CD4-positive, alpha-beta T cell (primary cell): ENCODE measurements at regions of chr1 and their contacts with region 1.

Region 1: GRCh38 chr1:116570358-116571200 is at the start of gene CD58:
- DNase-seq: peak; percentile 52 to 91 (median 74)
- ATAC-seq: peak; percentile 81
- H3K4me3 ChIP-seq: peak within 1 kb of the TSS; percentile 96
- H3K4me3 Mint-ChIP-seq: peak within 1 kb of the TSS; percentile 96
- H3K27ac ChIP-seq: peak within 1 kb of the TSS; percentile 72 to 87
- H3K27ac Mint-ChIP-seq: peak within 1 kb of the TSS; percentile 91
- H3K4me1 ChIP-seq: peaks cover 34% of the 10 kb centered on the region
- H3K4me1 Mint-ChIP-seq: peaks cover 43% of the 10 kb centered on the region
- H3K27me3 ChIP-seq: no peaks in the 10 kb centered on the region
- H3K27me3 Mint-ChIP-seq: peaks cover 4% of the 10 kb centered on the region
- CTCF ChIP-seq: peak; percentile 72
- total RNA-seq, gene CD58: 4.2 to 5.7 TPM

Region 2: GRCh38 chr1:116133696-116134650 is 436.6 kb before region 1 on chr1:
- CTCF ChIA-PET with region 1: interaction called, 9 read pairs
- POLR2A ChIA-PET with region 1: no interaction called
- intact Hi-C with region 1: loop called in 1 of 2 experiments (anchors 10 kb)
- DNase-seq: peak in 1 of 14 experiments; percentile 13
- ATAC-seq: no peak
- H3K4me3 ChIP-seq: no peak overlapping the region
- H3K4me3 Mint-ChIP-seq: no peak overlapping the region
- H3K27ac ChIP-seq: no peak overlapping the region
- H3K27ac Mint-ChIP-seq: no peak overlapping the region
- H3K4me1 ChIP-seq: peaks cover 8% of the 10 kb centered on the region
- H3K4me1 Mint-ChIP-seq: peaks cover 10% of the 10 kb centered on the region
- H3K27me3 ChIP-seq: no peaks in the 10 kb centered on the region
- H3K27me3 Mint-ChIP-seq: peaks cover 4% of the 10 kb centered on the region
- CTCF ChIP-seq: no peak

Region 3: GRCh38 chr1:116435806-116436610 is 134.6 kb before region 1 on chr1:
- CTCF ChIA-PET with region 1: no interaction called
- POLR2A ChIA-PET with region 1: no interaction called
- intact Hi-C with region 1: no loop called
- DNase-seq: peak in 1 of 14 experiments; percentile 32
- ATAC-seq: peak; percentile 42
- H3K4me3 ChIP-seq: no peak overlapping the region
- H3K4me3 Mint-ChIP-seq: no peak overlapping the region
- H3K27ac ChIP-seq: no peak overlapping the region
- H3K27ac Mint-ChIP-seq: no peak overlapping the region
- H3K4me1 ChIP-seq: no peaks in the 10 kb centered on the region
- H3K4me1 Mint-ChIP-seq: no peaks in the 10 kb centered on the region
- H3K27me3 ChIP-seq: no peaks in the 10 kb centered on the region
- H3K27me3 Mint-ChIP-seq: no peaks in the 10 kb centered on the region
- CTCF ChIP-seq: no peak

Region 4: GRCh38 chr1:116504308-116505156 is 66.0 kb before region 1 on chr1:
- CTCF ChIA-PET with region 1: interaction called, 10 read pairs
- POLR2A ChIA-PET with region 1: interaction called, 7 read pairs
- intact Hi-C with region 1: loop called in 1 of 2 experiments (anchors 5 kb)
- DNase-seq: peak; percentile 67 to 97 (median 81)
- ATAC-seq: peak; percentile 95
- H3K4me3 ChIP-seq: no peak overlapping the region
- H3K4me3 Mint-ChIP-seq: peak overlapping the region; percentile 23
- H3K27ac ChIP-seq: peak overlapping the region; percentile 76
- H3K27ac Mint-ChIP-seq: peak overlapping the region; percentile 89
- H3K4me1 ChIP-seq: peaks cover 64% of the 10 kb centered on the region
- H3K4me1 Mint-ChIP-seq: peaks cover 55% of the 10 kb centered on the region
- H3K27me3 ChIP-seq: no peaks in the 10 kb centered on the region
- H3K27me3 Mint-ChIP-seq: no peaks in the 10 kb centered on the region
- CTCF ChIP-seq: no peak

Region 5: GRCh38 chr1:116556289-116557006 is 14.1 kb before region 1 on chr1:
- CTCF ChIA-PET with region 1: interaction called, 18 read pairs
- POLR2A ChIA-PET with region 1: interaction called, 6 read pairs
- intact Hi-C with region 1: no loop called
- DNase-seq: peak; percentile 28 to 90 (median 52)
- ATAC-seq: peak; percentile 91
- H3K4me3 ChIP-seq: no peak overlapping the region
- H3K4me3 Mint-ChIP-seq: peak overlapping the region; percentile 0
- H3K27ac ChIP-seq: peak overlapping the region in 1 of 2 donors; percentile 57
- H3K27ac Mint-ChIP-seq: peak overlapping the region; percentile 43
- H3K4me1 ChIP-seq: peaks cover 53% of the 10 kb centered on the region
- H3K4me1 Mint-ChIP-seq: peaks cover 64% of the 10 kb centered on the region
- H3K27me3 ChIP-seq: no peaks in the 10 kb centered on the region
- H3K27me3 Mint-ChIP-seq: no peaks in the 10 kb centered on the region
- CTCF ChIP-seq: no peak

Region 6: DNA sequence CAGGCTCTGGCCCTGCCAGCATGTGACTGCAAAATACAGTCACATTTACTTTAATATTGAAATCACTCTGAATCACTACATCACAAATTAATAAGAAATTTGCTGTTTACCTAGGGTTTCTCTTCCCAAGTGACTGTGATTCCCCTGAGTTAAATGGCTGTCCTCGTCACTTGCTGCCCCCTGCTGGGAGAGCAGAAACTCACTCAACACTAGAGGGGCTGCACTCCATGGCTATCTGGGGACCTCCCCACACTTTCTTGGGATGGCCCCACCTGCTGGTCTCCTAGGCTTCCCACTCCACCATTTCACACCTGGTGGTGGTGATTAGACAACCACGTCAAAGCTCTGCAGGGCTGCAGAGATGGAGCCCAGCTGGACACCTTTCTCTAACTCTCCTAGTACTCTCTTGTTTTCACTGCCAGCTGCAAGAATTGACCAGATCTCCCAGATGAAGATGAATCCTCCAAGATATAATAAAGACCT is 247.0 kb after region 1 on chr1:
- CTCF ChIA-PET with region 1: interaction called, 4 read pairs
- POLR2A ChIA-PET with region 1: no interaction called
- intact Hi-C with region 1: loop called in 1 of 2 experiments (anchors 5 kb)
- DNase-seq: peak; percentile 50 to 89 (median 70)
- ATAC-seq: peak; percentile 63
- H3K4me3 ChIP-seq: no peak overlapping the region
- H3K4me3 Mint-ChIP-seq: peak overlapping the region; percentile 68
- H3K27ac ChIP-seq: no peak overlapping the region
- H3K27ac Mint-ChIP-seq: peak overlapping the region; percentile 95
- H3K4me1 ChIP-seq: peaks cover 23% of the 10 kb centered on the region
- H3K4me1 Mint-ChIP-seq: peaks cover 38% of the 10 kb centered on the region
- H3K27me3 ChIP-seq: no peaks in the 10 kb centered on the region
- H3K27me3 Mint-ChIP-seq: no peaks in the 10 kb centered on the region
- CTCF ChIP-seq: peak; percentile 94

Region 7: GRCh38 chr1:117128323-117129079 is 557.9 kb after region 1 on chr1:
- CTCF ChIA-PET with region 1: interaction called, 11 read pairs
- POLR2A ChIA-PET with region 1: interaction called, 6 read pairs
- intact Hi-C with region 1: loop called (anchors 1 to 2 kb)
- DNase-seq: peak in 3 of 14 experiments; percentile 50 to 51 (median 51)
- ATAC-seq: peak; percentile 49
- H3K4me3 ChIP-seq: no peak overlapping the region
- H3K4me3 Mint-ChIP-seq: no peak overlapping the region
- H3K27ac ChIP-seq: no peak overlapping the region
- H3K27ac Mint-ChIP-seq: no peak overlapping the region
- H3K4me1 ChIP-seq: no peaks in the 10 kb centered on the region
- H3K4me1 Mint-ChIP-seq: no peaks in the 10 kb centered on the region
- H3K27me3 ChIP-seq: peaks cover 0 to 4% of the 10 kb centered on the region in 2 experiments
- H3K27me3 Mint-ChIP-seq: peaks cover 9% of the 10 kb centered on the region
- CTCF ChIP-seq: peak; percentile 65